Ascending aorta (tissue), 2 donors: ENCODE measurements at regions of chr4 and their contacts with region 1.

Region 1: DNA sequence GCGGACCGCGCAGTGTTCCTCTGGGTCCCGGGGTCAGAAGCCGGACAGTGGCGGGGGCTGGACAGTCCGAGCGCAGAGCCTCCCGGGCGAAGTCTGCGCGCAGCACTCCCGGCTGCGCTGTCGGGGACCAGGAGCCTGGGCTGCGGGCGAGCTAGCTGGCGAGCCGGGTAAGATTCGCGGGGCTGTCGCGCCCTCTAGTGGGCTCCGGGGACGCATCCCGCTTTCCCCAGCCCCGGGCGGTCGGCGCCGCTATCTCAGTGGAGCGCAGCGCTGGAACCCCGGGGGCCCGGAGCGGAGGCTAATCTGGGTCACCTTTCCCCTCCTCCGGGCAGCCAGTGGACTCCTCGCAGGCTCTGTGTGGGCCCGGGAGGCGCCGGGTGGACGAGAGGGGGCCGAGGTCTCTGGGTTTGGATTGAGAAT is 4.2 kb downstream of the PDGFRA start:
- DNase-seq: peak in 1 of 2 donors; percentile 91
- H3K4me3 ChIP-seq: peak overlapping the region; percentile 71 to 81
- H3K27ac ChIP-seq: peak overlapping the region; percentile 87 to 93
- H3K4me1 ChIP-seq: peaks cover 0 to 4% of the 10 kb centered on the region in 2 donors
- H3K27me3 ChIP-seq: no peaks in the 10 kb centered on the region
- CTCF ChIP-seq: peak; percentile 65 to 88 (median 70)

Region 2: GRCh38 chr4:52234561-52235440 is 1998.5 kb before region 1 on chr4:
- intact Hi-C with region 1: loop called (anchors 10 kb)
- DNase-seq: no peak
- H3K4me3 ChIP-seq: peak overlapping the region; percentile 31 to 37
- H3K27ac ChIP-seq: no peak overlapping the region
- H3K4me1 ChIP-seq: peaks cover 0 to 5% of the 10 kb centered on the region in 2 donors
- H3K27me3 ChIP-seq: no peaks in the 10 kb centered on the region
- CTCF ChIP-seq: peak; percentile 43 to 71 (median 50)

Region 3: DNA sequence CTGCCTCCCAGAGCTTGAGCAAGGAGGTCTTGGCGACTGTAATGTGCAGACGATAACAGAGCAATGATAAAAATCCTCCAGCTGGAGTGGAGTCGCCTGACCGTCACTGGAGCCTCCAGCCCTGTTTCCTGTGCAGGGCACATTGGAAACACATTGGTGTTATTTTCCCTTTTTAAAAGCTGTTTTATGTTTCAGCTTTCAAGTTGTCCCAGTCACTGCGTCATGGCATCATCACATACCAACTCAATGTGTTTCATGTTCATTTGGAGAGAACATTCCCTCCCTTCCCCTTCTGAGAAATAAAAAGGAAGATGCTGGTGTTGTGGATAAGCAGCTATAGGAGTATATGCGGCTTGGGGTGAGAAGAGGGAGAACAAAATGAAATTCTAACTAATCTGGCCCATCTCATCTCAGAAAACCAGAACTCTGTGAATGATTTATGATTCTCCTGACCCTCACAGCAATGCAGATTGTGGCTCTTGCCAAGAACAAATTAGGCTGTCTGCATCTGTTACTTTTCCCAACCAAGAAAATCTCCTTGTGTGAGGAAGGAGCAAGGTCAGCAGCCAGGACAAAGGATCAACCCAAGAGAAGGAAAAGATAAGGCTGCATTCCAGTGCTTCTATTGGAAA is 1236.9 kb before region 1 on chr4:
- intact Hi-C with region 1: loop called (anchors 5 kb)
- DNase-seq: peak in 1 of 2 donors; percentile 76
- H3K4me3 ChIP-seq: peak overlapping the region in 1 of 2 donors; percentile 1
- H3K27ac ChIP-seq: peak overlapping the region; percentile 75 to 79
- H3K4me1 ChIP-seq: peaks cover 18 to 27% of the 10 kb centered on the region in 2 donors
- H3K27me3 ChIP-seq: no peaks in the 10 kb centered on the region
- CTCF ChIP-seq: no peak

Region 4: GRCh38 chr4:53365486-53366300 is 867.6 kb before region 1 on chr4 and contains the start of gene SCFD2:
- intact Hi-C with region 1: loop called (anchors 1 kb)
- DNase-seq: peak; percentile 95 to 99
- H3K4me3 ChIP-seq: peak within 1 kb of the TSS; percentile 69 to 97
- H3K27ac ChIP-seq: peak within 1 kb of the TSS; percentile 30 to 53
- H3K4me1 ChIP-seq: peaks cover 4 to 25% of the 10 kb centered on the region in 2 donors
- H3K27me3 ChIP-seq: no peaks in the 10 kb centered on the region
- CTCF ChIP-seq: no peak
- total RNA-seq, gene SCFD2: 22.8 TPM

Region 5: DNA sequence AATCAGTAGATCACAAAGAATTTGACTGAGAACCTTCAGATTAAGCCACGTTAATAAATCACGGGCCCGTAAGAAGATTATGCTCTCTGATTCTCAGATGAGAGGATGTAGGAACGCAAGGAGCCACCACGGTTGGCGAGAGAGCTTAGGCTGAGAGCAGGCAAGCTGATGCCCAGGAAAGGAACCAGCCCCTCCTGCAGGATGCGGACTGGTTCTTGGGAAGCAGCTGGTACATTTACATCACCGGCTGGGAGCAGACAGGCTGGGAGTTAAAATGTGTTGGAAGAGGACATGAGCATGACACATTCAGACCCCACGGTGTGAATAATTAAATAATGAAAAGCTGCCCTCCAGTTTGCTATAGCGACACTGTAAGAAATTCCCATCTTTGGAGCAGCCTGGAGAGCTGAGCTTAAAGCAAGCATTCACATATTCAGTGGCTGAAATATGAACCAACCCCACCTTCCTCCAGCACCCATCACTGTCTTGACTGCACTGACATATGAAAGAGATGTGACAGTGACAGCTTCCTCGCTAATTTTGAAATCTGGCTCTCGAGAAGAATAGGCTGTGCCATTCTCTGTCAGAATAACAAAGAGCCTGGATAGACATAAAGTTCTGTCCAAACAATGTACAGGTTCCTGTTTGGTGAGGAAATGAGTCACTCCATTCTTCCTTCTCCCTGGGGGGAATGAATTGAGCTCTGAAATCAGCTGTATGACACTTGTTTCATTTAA is 675.1 kb before region 1 on chr4:
- intact Hi-C with region 1: loop called (anchors 5 kb)
- DNase-seq: peak in 1 of 2 donors; percentile 79
- H3K4me3 ChIP-seq: peak overlapping the region; percentile 11 to 59
- H3K27ac ChIP-seq: peak overlapping the region; percentile 81 to 85
- H3K4me1 ChIP-seq: peaks cover 0 to 7% of the 10 kb centered on the region in 2 donors
- H3K27me3 ChIP-seq: no peaks in the 10 kb centered on the region
- CTCF ChIP-seq: no peak

Region 6: GRCh38 chr4:53714236-53715140 is 518.8 kb before region 1 on chr4:
- intact Hi-C with region 1: loop called (anchors 5 kb)
- DNase-seq: no peak
- H3K4me3 ChIP-seq: no peak overlapping the region
- H3K27ac ChIP-seq: peak overlapping the region in 1 of 2 donors; percentile 56
- H3K4me1 ChIP-seq: peaks cover 5 to 14% of the 10 kb centered on the region in 2 donors
- H3K27me3 ChIP-seq: no peaks in the 10 kb centered on the region
- CTCF ChIP-seq: no peak